ENCODE measurements at regions of chr11 and their contacts with region 1.

Region 1: DNA sequence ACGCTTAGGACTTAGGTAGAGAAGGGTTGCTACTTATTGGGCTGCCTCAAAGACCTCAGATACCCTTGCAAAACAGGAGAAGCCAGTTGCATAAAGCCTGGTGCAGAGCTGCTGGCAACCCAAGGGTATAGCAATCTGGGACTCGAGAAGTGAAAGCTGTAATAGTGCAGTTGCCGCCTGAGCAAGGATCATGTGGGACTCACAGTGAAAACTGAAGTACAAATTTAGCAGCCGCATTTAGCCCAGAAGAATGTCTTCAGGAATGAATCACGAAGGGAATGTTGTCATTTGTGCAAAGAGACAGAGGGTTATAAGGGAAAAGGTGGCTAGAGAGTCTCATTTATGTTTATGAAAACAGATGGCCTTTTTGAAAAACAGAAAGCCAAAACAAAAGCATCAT is 267.2 kb downstream of the TENM4 start:
- DNase-seq: no peak
- H3K4me3 ChIP-seq: no peak overlapping the region
- H3K27ac ChIP-seq: no peak overlapping the region
- H3K4me1 ChIP-seq: peaks cover 27% of the 10 kb centered on the region
- H3K27me3 ChIP-seq: no peaks in the 10 kb centered on the region
- CTCF ChIP-seq: no peak

Region 2: GRCh38 chr11:79129702-79130101 is 43.9 kb before region 1 on chr11:
- CTCF ChIA-PET with region 1: no interaction called
- dilution Hi-C with region 1: no loop called
- in situ Hi-C with region 1: no loop called
- intact Hi-C with region 1: no loop called
- DNase-seq: no peak
- H3K4me3 ChIP-seq: no peak overlapping the region
- H3K27ac ChIP-seq: no peak overlapping the region
- H3K4me1 ChIP-seq: no peaks in the 10 kb centered on the region
- H3K27me3 ChIP-seq: no peaks in the 10 kb centered on the region
- CTCF ChIP-seq: no peak

Region 3: GRCh38 chr11:79227757-79228755 is 54.4 kb after region 1 on chr11:
- CTCF ChIA-PET with region 1: no interaction called
- dilution Hi-C with region 1: loop called (anchors 5 kb)
- in situ Hi-C with region 1: no loop called
- intact Hi-C with region 1: no loop called
- DNase-seq: peak; percentile 9
- H3K4me3 ChIP-seq: no peak overlapping the region
- H3K27ac ChIP-seq: no peak overlapping the region
- H3K4me1 ChIP-seq: no peaks in the 10 kb centered on the region
- H3K27me3 ChIP-seq: no peaks in the 10 kb centered on the region
- CTCF ChIP-seq: no peak

Region 4: DNA sequence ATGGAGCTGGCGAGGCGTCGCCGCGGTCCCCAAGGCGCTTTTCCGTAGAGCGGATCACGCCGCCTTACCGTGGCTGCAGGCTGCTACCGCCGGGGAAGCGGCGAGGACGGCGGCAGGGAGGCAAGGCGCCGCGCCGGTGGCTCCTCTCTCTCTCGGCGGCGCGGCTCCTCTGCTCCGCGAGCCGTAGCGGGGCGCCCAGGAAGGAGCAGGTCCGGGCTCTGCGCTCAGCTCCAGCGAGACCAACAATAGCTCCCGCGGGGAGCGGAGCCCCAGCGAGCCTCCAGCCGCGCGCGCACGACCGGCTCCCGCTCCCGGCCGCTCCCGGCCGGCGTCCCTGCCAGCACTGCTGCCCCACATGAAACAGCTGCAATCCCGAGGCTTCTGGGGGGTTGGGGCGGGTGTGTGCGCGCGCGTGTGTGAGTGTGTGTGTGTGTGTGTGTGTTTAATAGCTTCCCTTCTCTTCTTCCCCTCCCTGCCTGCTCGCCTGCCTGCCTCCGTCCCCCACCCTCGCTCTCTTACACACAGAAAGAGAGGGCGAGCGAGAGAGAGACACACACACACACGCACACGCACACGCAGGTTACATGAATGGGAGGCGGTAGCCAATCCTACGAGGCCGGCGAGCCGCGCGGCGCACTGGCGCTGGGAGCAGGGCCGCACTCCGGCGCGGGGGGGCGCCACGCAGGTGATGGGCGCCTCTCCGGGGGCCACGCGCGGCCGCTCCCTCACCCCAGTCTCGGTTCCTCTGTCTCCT is 267.0 kb after region 1 on chr11 and contains the start of gene TENM4:
- CTCF ChIA-PET with region 1: no interaction called
- dilution Hi-C with region 1: no loop called
- in situ Hi-C with region 1: no loop called
- intact Hi-C with region 1: no loop called
- DNase-seq: peak; percentile 72
- H3K4me3 ChIP-seq: peak within 1 kb of the TSS; percentile 71 to 95 (median 88)
- H3K27ac ChIP-seq: peak within 1 kb of the TSS; percentile 43
- H3K4me1 ChIP-seq: peaks cover 16% of the 10 kb centered on the region
- H3K27me3 ChIP-seq: no peaks in the 10 kb centered on the region
- CTCF ChIP-seq: peak; percentile 40 to 47
- total RNA-seq, gene TENM4: 4.8 to 26.5 TPM